Activated CD4-positive, alpha-beta memory T cell treated with anti-CD3 and anti-CD28 coated beads, Interleukin-2, amount 10 ng/mL, durations not matched to agents 7 days and 5 days (primary cell): ENCODE measurements at regions of chr7 and their contacts with region 1.

Region 1: DNA sequence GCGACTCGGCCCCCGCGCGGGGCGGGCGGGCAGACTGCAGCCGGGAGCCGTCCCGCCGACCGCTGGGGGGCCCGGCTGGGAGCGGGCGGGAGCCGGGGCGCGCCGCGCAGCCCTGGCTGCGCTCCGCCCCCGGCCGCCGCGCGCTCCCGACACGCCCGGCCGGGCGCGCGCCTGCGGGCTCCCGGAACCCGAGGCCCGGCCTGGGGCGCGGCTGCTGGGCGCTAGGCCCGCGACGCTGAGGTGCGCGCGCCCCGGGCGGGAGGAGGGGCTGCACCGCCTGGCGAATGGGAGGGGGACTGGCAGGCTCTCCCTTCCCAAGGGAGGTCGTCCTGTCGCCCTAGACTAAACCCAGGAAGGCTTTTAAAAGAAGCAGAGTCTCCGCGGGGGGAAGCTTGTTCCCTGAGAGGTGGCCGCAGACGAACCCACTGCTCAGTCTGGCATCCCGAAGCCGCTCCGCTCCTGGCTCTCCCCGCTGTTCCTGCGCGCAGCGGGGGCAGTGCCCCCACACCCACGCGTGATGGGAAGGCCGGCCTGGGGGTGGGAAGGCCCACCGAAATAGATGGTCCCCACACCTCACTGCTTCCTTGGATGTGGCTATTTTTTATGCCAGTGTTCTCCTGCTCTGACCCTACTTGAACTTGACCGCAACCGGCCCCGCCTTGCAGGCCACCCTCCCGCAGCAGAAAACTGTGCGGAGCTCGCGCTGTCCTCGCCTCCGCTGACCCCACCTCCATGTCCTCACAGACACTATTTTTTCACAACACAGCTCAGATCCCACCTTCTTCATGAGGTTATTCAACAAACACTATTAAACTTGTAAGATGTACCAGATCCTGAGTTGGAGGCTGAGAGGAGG is at the start of gene VOPP1:
- DNase-seq: peak; percentile 59
- H3K4me3 Mint-ChIP-seq: peak within 1 kb of the TSS; percentile 86
- H3K27ac Mint-ChIP-seq: peak within 1 kb of the TSS; percentile 79
- H3K4me1 Mint-ChIP-seq: peaks cover 68% of the 10 kb centered on the region
- H3K27me3 Mint-ChIP-seq: no peaks in the 10 kb centered on the region
- total RNA-seq, gene VOPP1: 51.4 to 52.7 TPM

Region 2: DNA sequence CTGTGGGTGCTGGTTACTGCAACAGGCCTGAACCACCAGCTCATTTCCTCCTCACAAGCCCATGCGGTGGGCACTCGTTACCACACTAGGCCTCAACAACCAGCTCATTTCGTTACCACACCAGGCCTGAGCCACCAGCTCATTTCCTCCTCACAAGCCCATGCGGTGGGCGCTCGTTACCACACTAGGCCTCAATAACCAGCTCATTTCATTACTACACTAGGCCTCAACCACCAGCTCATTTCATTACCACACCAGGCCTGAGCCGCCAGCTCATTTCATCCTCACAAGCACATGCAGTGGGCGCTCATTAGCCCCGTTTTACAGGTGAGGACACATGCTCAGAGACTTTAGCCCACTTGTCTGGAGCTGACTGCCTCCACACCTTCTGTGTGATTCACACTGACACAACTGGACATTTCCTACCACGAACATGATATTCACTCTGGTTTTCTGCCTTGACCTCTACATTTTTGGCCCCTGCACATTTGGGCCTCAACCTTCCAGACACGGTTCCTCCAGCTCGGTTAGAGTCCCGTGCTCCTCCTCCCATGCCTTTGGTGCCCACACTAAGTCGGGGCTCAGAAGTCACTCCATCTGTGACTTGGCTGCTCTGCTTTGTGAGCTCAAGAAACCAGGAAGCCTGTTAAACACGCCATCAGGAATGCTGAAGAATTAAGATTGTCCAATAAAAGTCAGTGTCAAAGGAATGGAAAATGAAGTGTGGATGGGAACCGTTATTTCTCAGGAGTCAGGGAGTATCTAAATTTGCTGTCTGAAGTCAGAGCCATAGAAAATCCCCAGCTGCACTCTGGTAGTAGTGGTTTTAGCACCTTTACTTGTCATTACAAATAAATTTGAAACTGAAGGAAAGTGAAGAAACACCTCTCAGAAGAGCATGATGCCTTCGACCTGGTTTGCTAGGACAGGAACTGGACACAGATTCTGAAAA is 263.3 kb before region 1 on chr7:
- CTCF ChIA-PET with region 1: interaction called, 3 read pairs
- POLR2A ChIA-PET with region 1: interaction called, 10 read pairs
- DNase-seq: peak; percentile 88
- H3K4me3 Mint-ChIP-seq: peak overlapping the region; percentile 19
- H3K27ac Mint-ChIP-seq: peak overlapping the region; percentile 66
- H3K4me1 Mint-ChIP-seq: peaks cover 49% of the 10 kb centered on the region
- H3K27me3 Mint-ChIP-seq: peaks cover 57% of the 10 kb centered on the region